ENCODE measurements at regions of chr3 and their contacts with region 1.

Region 1: DNA sequence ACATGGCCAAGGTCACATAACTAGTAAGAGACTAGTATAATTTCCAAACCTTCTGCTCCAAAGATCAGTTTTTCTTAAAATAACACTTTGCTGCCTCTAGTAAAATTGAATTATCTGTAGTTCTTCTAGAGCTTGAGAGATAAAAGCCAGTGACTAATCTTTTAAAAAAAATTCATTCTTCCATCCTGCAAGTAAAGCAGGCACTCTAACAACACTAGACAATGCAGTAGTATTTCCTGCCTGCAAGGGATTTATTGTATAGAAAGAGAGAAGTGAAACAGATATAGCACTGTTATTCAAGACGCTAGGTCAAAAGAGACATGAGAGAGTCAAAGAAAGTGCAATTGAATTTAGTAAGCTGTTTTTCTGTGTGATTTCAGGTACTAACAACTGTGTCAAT is 159.5 kb upstream of the TBC1D5 start:
- H3K4me3 Mint-ChIP-seq: no peak overlapping the region
- H3K27ac Mint-ChIP-seq: no peak overlapping the region
- H3K4me1 Mint-ChIP-seq: peaks cover 26% of the 10 kb centered on the region
- H3K27me3 Mint-ChIP-seq: no peaks in the 10 kb centered on the region

Region 2: GRCh38 chr3:17585394-17586325 is 316.2 kb before region 1 on chr3:
- intact Hi-C with region 1: no loop called
- H3K4me3 Mint-ChIP-seq: no peak overlapping the region
- H3K27ac Mint-ChIP-seq: no peak overlapping the region
- H3K4me1 Mint-ChIP-seq: no peaks in the 10 kb centered on the region
- H3K27me3 Mint-ChIP-seq: no peaks in the 10 kb centered on the region

Region 3: GRCh38 chr3:17771177-17772017 is 130.5 kb before region 1 on chr3:
- intact Hi-C with region 1: no loop called
- H3K4me3 Mint-ChIP-seq: no peak overlapping the region
- H3K27ac Mint-ChIP-seq: no peak overlapping the region
- H3K4me1 Mint-ChIP-seq: peaks cover 5% of the 10 kb centered on the region
- H3K27me3 Mint-ChIP-seq: peaks cover 4% of the 10 kb centered on the region

Region 4: DNA sequence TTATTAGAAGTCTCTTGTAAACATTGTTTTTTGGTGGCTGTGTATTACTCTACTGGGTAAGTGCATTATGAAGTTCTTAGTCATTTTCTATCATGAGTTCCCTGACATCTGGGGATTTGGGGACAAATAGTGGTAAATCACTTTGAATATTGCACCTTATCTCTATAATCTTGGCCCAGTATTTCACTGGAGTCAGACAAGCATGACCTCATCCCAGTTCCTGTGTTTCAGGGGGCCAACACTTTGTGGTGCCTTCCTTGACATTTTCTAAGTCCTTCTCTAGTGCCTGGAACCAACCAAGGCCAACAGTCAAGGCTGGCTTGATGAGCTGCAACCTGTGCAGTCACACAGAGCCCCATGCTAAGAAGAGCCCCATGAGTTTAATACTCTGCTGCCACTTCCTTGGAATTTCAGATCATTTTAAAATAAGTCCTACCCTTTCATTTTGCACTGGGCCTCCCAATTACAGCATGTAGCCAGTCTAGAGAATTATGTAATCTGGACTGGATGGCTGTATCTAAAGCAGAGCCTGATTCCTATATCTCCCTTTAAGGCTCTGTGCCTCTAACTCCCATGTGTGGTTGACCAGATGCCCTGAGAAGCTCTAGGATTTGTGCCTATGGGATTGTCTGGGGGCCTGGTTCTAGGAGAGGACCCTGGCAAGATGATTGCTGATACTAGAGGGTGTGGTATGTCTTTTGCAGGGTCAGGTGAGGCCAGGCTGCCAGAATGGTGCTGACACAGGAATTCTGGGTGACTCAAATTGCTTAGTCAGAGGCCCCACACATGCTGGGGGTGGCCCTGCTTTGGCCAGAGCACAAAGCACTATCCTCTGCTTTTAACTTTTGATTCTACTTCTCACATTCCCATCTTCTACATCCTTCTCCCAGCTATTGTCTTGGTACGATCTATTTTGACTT is 160.1 kb after region 1 on chr3:
- intact Hi-C with region 1: no loop called
- H3K4me3 Mint-ChIP-seq: no peak overlapping the region
- H3K27ac Mint-ChIP-seq: no peak overlapping the region
- H3K4me1 Mint-ChIP-seq: no peaks in the 10 kb centered on the region
- H3K27me3 Mint-ChIP-seq: no peaks in the 10 kb centered on the region

Region 5: GRCh38 chr3:19808834-19809233 is 1906.9 kb after region 1 on chr3:
- intact Hi-C with region 1: loop called (anchors 10 kb)
- H3K4me3 Mint-ChIP-seq: no peak overlapping the region
- H3K27ac Mint-ChIP-seq: no peak overlapping the region
- H3K4me1 Mint-ChIP-seq: no peaks in the 10 kb centered on the region
- H3K27me3 Mint-ChIP-seq: no peaks in the 10 kb centered on the region